ENCODE measurements at regions of chr5 and their contacts with region 1.

Region 1: GRCh38 chr5:14628346-14628745 is 36.2 kb upstream of the OTULIN start:
- DNase-seq: peak; percentile 51
- H3K4me3 ChIP-seq: no peak overlapping the region
- CTCF ChIP-seq: no peak

Region 2: DNA sequence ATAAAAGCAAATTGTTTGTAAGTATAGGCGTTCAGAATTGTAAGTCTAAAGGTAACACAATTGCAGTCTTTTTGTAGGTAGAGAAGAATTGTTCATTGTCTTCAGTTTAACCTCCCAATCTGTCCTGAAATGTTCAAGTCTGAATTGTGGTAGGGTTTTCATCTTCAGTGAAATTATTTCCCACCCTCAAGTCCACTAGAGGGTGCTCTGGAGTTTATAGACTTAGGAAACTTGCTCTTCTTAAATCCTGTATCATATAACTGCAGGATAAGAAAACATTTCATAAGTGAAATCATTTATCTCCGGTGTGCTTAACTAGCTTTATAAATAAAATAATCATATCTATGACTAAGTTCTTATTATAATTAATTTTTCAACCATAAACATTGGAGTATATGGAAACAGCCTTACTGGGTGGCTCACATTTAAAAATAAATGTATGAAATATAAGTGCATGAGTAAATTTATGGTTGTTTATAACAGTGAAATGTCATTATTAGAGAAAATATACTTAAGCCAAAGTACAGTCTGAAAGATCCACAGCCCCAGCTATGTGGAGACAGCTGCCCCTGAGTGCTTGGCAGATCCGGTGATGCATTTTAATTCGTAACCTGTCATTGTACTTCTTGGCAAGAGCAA is 229.2 kb before region 1 on chr5:
- in situ Hi-C with region 1: loop called (anchors 25 kb)
- DNase-seq: peak; percentile 61
- H3K4me3 ChIP-seq: no peak overlapping the region
- CTCF ChIP-seq: peak; percentile 59

Region 3: DNA sequence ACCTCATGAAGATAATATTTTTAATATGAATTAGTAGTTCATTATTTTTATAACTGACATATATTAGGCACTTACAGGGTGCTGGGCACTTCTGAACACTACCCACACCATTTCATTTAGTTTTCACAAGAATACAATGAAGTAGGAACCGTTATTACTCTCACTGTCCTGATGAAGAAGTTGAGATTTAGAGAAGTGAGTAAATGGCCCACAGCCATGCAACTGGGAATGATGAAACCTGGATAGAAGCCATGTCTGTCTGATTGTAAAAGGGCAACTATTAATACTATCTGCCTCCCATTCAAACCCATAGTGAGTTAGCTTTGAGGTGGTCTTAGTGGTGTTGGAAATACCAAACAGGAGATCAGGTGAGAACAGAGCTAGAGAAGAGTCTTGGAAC is 76.3 kb before region 1 on chr5:
- in situ Hi-C with region 1: no loop called
- DNase-seq: no peak
- H3K4me3 ChIP-seq: no peak overlapping the region
- CTCF ChIP-seq: no peak